GM10248 (cell line): ENCODE measurements at regions of chr2 and their contacts with region 1.

Region 1: GRCh38 chr2:175690113-175690837 is 311.8 kb downstream of the LNPK start:
- DNase-seq: peak; percentile 20
- CTCF ChIP-seq: peak; percentile 69

Region 2: GRCh38 chr2:175662335-175662734 is 27.9 kb before region 1 on chr2:
- CTCF ChIA-PET with region 1: no interaction called
- POLR2A ChIA-PET with region 1: no interaction called
- DNase-seq: no peak
- CTCF ChIP-seq: no peak

Region 3: DNA sequence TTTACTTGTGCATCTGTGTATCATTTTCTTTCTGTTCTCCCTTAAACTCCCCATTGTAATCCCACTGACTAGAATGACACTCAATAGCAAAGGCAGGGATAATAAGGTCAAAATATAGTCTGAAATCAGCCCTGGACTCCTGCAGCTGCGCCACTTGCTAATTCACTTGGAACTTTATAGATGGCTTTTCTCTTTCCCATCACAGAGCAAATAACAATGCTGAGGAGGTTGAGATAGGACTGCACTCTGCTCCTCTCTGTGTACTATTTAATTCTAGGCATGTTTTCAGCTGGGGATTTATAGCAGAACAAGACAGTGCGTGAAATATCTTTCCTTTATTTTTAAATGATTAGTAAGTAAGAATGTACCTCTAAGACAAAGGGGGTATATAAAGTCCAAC is 12.4 kb before region 1 on chr2:
- CTCF ChIA-PET with region 1: interaction called, 12 read pairs
- POLR2A ChIA-PET with region 1: no interaction called
- DNase-seq: no peak
- CTCF ChIP-seq: no peak

Region 4: GRCh38 chr2:175709248-175709647 is 19.0 kb after region 1 on chr2:
- CTCF ChIA-PET with region 1: no interaction called
- POLR2A ChIA-PET with region 1: no interaction called
- DNase-seq: no peak
- CTCF ChIP-seq: no peak

Region 5: GRCh38 chr2:176088048-176088936 is 398.0 kb after region 1 on chr2:
- CTCF ChIA-PET with region 1: interaction called, 32 read pairs
- POLR2A ChIA-PET with region 1: no interaction called
- DNase-seq: peak; percentile 54
- CTCF ChIP-seq: peak; percentile 82